Cardiac septum (tissue), 1 donor: ENCODE measurements at regions of chr5 and their contacts with region 1.

Region 1: GRCh38 chr5:32585446-32586275 is at the start of gene SUB1:
- DNase-seq: peak; percentile 97
- total RNA-seq, gene SUB1: 180 TPM

Region 2: GRCh38 chr5:32092938-32093812 is 492.5 kb before region 1 on chr5:
- intact Hi-C with region 1: loop called (anchors 10 kb)
- DNase-seq: no peak

Region 3: DNA sequence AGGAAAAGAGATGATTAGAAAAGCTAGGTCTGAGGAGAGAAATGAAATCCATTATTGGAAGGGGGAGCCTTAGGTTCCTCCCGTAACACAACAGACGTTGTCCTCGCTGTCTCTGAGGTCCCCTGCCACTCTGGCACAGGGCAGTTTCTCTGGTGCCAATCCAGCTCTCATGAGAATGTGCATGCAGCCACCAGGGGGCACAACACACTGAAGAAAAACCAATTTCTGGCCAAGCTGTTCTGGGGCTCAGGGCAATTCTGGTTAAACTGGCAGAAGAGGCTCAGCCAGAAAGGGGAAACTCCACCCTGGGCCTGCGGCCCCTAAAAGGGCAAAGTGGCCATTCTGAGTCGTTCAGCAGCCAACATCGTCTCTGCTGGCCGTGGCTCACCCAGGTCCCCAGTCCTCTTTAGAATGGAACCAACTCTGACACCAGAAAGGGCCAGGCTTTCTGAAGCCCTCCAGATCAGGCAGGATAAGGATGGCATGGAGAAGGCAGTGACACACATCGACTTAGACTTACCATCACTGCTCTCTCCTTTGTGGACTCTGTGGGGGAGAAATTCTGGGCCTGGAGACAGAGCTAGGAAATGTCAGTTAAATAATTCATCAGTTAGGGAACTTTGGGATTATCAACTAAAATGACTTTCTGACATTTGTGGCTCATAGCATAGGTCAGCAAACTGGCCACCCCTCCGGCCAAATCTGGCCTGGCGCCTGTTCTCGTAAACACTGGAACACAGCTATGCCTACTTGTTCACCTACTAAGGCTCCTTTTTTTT is 353.0 kb before region 1 on chr5:
- intact Hi-C with region 1: loop called (anchors 10 kb)
- DNase-seq: peak; percentile 81

Region 4: GRCh38 chr5:32444431-32445286 is 141.0 kb before region 1 on chr5 and contains the start of gene ZFR:
- intact Hi-C with region 1: loop called (anchors 5 kb)
- DNase-seq: peak; percentile 97
- total RNA-seq, gene ZFR: 73.8 TPM

Region 5: GRCh38 chr5:32489791-32490582 is 95.7 kb before region 1 on chr5:
- intact Hi-C with region 1: loop called (anchors 1 kb)
- DNase-seq: peak; percentile 84

Region 6: GRCh38 chr5:32642276-32643002 is 56.8 kb after region 1 on chr5:
- intact Hi-C with region 1: no loop called
- DNase-seq: no peak

Region 7: GRCh38 chr5:33257807-33258483 is 672.3 kb after region 1 on chr5:
- intact Hi-C with region 1: no loop called
- DNase-seq: no peak